ENCODE measurements at regions of chr11 and their contacts with region 1.

Region 1: DNA sequence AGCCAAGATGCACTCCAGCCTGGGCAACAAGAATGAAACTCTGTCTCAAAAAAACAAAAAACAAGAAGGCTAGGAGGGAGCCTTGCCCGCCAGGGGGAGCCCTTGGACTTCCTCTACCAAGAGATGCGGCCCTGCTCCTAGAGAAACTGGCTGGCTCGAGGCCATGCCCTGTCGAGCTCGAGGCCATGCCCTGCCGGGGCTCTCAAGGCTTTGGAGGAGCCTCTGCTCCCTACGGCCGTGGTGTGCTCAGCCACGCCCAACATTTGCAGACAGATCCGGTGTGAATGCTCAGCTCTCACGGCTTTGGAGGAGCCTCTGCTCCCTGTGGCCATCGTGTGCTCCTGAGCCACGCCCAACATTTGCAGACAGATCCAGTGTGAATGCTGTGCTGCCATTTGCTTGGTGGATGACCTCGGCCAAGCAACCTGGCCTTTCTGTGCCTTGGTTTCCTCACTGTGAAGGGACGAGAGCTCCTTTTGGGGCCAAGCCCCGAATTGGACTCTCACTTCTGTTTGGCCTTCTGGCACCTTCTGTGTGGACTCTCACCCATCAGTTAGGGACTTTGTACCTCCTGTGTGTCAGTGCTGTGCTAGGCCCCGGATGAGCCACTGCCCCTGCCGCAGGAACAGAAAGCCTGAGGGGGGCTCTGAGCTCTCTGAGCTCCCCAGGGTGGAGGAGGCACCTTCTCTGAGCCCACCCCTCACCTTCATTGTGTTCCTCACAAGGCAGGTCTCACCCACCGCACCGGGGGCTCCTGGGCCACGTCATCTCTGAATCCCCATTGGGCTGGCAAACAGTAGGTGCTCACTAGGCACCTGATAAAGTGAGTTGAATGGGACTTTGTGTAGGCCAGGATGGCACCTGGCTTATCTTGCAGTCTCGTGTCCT is 14.1 kb downstream of the C11orf24 start:
- DNase-seq: peak; percentile 98
- H3K4me3 ChIP-seq: peak overlapping the region in 2 of 4 donors; percentile 28 to 31
- H3K27ac ChIP-seq: peak overlapping the region in 3 of 4 donors; percentile 21 to 54 (median 34)
- H3K4me1 ChIP-seq: peaks cover 0 to 19% (median 11%) of the 10 kb centered on the region in 4 donors
- H3K27me3 ChIP-seq: no peaks in the 10 kb centered on the region
- CTCF ChIP-seq: peak; percentile 87 to 92 (median 90)
- EP300 ChIP-seq: no peak
- POLR2A ChIP-seq: no peak

Region 2: DNA sequence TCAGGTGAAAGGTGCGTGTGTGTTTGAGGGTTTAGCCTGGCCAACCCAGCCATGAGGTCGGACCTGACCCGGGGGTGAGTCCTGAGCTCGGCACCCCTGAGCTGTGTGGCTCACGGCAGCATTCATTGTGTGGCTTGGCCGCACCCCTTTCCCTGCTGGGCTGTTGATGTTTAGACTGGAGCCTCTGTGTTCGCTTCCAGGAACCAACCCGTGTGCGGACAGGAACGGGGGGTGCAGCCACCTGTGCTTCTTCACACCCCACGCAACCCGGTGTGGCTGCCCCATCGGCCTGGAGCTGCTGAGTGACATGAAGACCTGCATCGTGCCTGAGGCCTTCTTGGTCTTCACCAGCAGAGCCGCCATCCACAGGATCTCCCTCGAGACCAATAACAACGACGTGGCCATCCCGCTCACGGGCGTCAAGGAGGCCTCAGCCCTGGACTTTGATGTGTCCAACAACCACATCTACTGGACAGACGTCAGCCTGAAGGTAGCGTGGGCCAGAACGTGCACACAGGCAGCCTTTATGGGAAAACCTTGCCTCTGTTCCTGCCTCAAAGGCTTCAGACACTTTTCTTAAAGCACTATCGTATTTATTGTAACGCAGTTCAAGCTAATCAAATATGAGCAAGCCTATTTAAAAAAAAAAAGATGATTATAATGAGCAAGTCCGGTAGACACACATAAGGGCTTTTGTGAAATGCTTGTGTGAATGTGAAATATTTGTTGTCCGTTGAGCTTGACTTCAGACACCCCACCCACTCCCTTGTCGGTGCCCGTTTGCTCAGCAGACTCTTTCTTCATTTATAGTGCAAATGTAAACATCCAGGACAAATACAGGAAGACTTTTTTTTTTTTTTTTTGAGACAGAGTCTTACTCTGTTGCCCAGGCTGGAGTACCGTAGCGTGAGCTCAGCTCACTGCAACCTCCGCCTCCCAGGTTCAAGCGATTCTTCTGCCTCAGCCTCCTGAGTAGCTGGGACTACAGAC is 148.9 kb after region 1 on chr11:
- intact Hi-C with region 1: loop called (anchors 1 kb)
- DNase-seq: no peak
- H3K4me3 ChIP-seq: no peak overlapping the region
- H3K27ac ChIP-seq: peak overlapping the region; percentile 28 to 73 (median 36)
- H3K4me1 ChIP-seq: peaks cover 0 to 15% (median 11%) of the 10 kb centered on the region in 4 donors
- H3K27me3 ChIP-seq: no peaks in the 10 kb centered on the region
- CTCF ChIP-seq: no peak
- EP300 ChIP-seq: no peak
- POLR2A ChIP-seq: no peak

Region 3: DNA sequence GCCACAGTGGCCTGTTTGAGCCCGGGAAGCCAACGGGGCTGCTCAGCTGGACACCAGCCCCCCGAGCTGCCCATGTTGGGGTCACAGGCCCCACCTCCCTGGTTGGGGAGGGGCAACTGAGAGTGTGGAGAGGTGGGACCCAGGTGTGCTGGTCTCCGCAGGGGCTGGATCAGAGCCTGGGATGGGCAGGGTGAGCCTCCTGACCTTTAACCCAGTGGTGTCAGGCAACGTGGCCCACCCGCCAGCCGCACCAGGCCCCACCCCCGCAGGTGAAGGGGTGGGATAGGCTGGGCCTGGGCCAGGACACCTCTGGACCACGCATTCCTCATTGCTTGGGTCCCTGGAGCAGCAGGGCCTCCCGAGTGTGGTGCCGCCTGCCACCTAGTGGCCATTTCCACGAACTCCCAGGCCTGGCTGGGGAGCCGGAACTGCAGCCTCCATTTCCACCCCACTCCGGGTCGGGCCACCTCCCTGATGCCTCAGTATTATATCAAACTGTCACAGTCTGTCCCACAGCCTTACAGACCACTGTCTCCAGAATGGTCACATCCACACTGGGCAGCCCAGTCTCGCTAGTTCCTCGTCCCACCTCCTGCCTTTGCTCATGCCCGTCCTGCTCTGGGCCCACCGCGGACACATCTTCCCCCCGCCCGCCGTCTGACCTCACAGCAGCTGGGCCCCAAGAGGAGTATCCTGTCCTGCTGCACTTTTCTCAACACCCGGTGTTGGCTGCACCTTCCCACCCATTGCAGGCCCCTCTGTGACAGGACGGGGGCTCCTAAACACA is 189.5 kb after region 1 on chr11:
- intact Hi-C with region 1: loop called (anchors 1 kb)
- DNase-seq: peak; percentile 90
- H3K4me3 ChIP-seq: no peak overlapping the region
- H3K27ac ChIP-seq: peak overlapping the region in 3 of 4 donors; percentile 22 to 34 (median 25)
- H3K4me1 ChIP-seq: peaks cover 0 to 24% (median 13%) of the 10 kb centered on the region in 4 donors
- H3K27me3 ChIP-seq: no peaks in the 10 kb centered on the region
- CTCF ChIP-seq: peak; percentile 75 to 96 (median 93)
- EP300 ChIP-seq: no peak
- POLR2A ChIP-seq: no peak